ENCODE measurements at regions of chr19 and their contacts with region 1.

Region 1: GRCh38 chr19:48255376-48256303 is at the start of gene CARD8:
- DNase-seq: peak; percentile 54 to 91 (median 84)
- ATAC-seq: peak; percentile 85
- H3K4me3 ChIP-seq: peak within 1 kb of the TSS; percentile 100
- H3K4me3 Mint-ChIP-seq: peak within 1 kb of the TSS; percentile 74 to 100 (median 99)
- H3K27ac ChIP-seq: peak within 1 kb of the TSS; percentile 88
- H3K27ac Mint-ChIP-seq: peak within 1 kb of the TSS; percentile 90 to 100 (median 97)
- H3K4me1 ChIP-seq: peaks cover 53 to 56% of the 10 kb centered on the region in 2 donors
- H3K4me1 Mint-ChIP-seq: peaks cover 51 to 86% (median 76%) of the 10 kb centered on the region in 7 donors
- H3K27me3 ChIP-seq: no peaks in the 10 kb centered on the region
- H3K27me3 Mint-ChIP-seq: no peaks in the 10 kb centered on the region
- total RNA-seq, gene CARD8: 104 to 301 (median 182) TPM

Region 2: GRCh38 chr19:48110350-48110966 is 145.2 kb before region 1 on chr19 and contains the start of gene PLA2G4C:
- CTCF ChIA-PET with region 1: interaction called, 4 read pairs
- POLR2A ChIA-PET with region 1: no interaction called
- intact Hi-C with region 1: loop called (anchors 1 kb)
- DNase-seq: peak; percentile 69 to 88 (median 79)
- ATAC-seq: peak; percentile 83
- H3K4me3 ChIP-seq: peak within 1 kb of the TSS; percentile 62
- H3K4me3 Mint-ChIP-seq: peak within 1 kb of the TSS; percentile 66 to 86 (median 79)
- H3K27ac ChIP-seq: peak within 1 kb of the TSS; percentile 30
- H3K27ac Mint-ChIP-seq: peak within 1 kb of the TSS; percentile 37 to 92 (median 71)
- H3K4me1 ChIP-seq: no peaks in the 10 kb centered on the region
- H3K4me1 Mint-ChIP-seq: peaks cover 5 to 19% (median 9%) of the 10 kb centered on the region in 7 donors
- H3K27me3 ChIP-seq: no peaks in the 10 kb centered on the region
- H3K27me3 Mint-ChIP-seq: no peaks in the 10 kb centered on the region
- total RNA-seq, gene PLA2G4C: 3.3 to 21.2 (median 9.1) TPM

Region 3: DNA sequence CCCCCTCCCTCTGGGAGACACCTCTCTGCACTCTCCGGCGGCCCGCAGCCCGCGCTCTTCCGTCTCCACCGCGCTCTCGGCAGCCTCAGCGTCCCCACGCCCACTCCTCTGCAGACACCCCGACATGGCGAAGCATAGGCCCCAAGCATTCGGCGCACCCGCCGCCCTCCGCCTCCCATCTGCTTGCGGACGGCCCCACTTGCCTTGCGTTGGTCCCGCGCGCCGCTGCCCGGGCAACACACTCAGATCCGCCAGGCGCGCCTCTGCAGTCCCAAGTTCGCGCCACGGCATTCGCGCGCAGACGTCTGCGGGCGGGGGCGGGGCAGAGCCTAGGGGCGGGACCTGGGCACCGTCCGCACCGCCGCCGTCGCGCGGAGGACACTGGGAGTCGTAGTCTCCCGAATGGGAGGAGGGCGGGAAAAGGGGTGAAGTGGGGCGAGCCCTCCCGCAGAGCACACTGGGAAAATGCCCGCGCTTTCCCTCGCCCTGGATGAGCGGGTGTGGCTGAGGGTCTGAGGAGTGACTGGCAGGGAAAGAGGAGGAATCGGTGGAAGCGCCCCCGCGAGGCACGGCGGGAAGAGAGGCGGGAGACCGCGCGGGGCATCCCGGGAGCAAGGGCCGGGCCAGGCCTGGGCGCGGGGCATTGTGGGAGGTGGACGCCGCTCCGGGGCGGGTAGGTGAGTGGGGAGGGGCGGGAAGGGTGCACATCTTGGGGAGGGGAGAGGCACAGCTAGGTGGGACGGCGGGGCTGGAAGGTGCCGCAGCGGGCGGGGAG is 85.4 kb before region 1 on chr19 and contains the starts of genes LIG1 and ZSWIM9:
- CTCF ChIA-PET with region 1: interaction called, 5 read pairs
- POLR2A ChIA-PET with region 1: interaction called, 4 read pairs
- intact Hi-C with region 1: loop called (anchors 1 kb)
- DNase-seq: peak; percentile 87 to 96 (median 94)
- ATAC-seq: peak; percentile 89
- H3K4me3 ChIP-seq: peak within 1 kb of the TSS; percentile 98
- H3K4me3 Mint-ChIP-seq: peak within 1 kb of the TSS; percentile 90 to 100 (median 97)
- H3K27ac ChIP-seq: peak within 1 kb of the TSS; percentile 94
- H3K27ac Mint-ChIP-seq: peak within 1 kb of the TSS; percentile 92 to 100 (median 97)
- H3K4me1 ChIP-seq: peaks cover 14 to 16% of the 10 kb centered on the region in 2 donors
- H3K4me1 Mint-ChIP-seq: peaks cover 20 to 44% (median 32%) of the 10 kb centered on the region in 7 donors
- H3K27me3 ChIP-seq: no peaks in the 10 kb centered on the region
- H3K27me3 Mint-ChIP-seq: no peaks in the 10 kb centered on the region
- total RNA-seq, gene LIG1: 61.0 to 134 (median 122) TPM
- total RNA-seq, gene ZSWIM9: 5.0 to 11.6 (median 7.4) TPM

Region 4: DNA sequence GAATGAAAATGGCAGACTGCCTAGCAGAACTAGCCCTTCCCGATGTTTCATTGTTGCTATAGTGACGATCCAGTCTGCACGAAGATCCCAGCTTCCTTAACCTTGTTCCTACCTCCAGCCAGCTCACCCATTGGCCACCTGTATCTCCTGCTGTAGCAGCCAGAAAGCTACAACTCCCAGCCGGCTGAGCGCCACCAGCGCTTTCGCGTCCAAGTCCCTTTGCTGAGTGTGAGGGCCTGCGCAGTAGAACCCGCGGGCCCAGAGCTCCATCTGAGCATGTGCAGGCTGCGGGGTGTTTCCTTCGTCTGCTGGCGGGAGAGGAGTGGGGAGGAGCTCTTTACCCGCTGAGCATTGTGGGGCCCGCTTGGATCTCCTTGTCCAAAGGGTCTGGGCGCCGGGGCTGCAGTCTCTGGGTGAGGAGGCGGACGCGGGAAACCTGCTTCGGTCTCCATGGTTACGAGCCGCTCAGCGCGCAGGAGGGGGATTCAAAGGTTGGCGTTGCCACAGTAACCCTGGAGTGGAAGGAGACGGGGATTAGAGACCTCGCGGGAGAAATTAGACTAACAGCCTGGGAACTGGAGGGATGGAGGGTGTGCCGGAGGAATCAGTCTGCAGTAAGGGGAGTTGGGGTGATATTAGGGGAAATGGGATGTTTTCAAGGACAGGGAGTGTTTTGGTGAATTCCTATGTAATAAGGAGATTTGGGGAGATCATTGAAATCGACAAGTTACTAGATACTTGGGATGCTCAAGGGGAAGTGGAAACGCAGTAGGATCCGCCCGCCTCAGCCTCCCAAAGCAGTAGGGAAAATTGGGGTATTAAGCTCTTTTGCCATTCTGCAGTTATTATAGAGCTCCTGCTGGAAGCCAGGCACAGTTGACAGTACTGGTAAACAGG is 51.7 kb before region 1 on chr19:
- CTCF ChIA-PET with region 1: interaction called, 17 read pairs
- POLR2A ChIA-PET with region 1: interaction called, 21 read pairs
- intact Hi-C with region 1: loop called (anchors 1 to 2 kb)
- DNase-seq: peak; percentile 73 to 90 (median 89)
- ATAC-seq: peak; percentile 100
- H3K4me3 ChIP-seq: peak overlapping the region; percentile 73
- H3K4me3 Mint-ChIP-seq: no peak overlapping the region
- H3K27ac ChIP-seq: peak overlapping the region; percentile 81
- H3K27ac Mint-ChIP-seq: no peak overlapping the region
- H3K4me1 ChIP-seq: peaks cover 8 to 19% of the 10 kb centered on the region in 2 donors
- H3K4me1 Mint-ChIP-seq: peaks cover 4 to 34% (median 18%) of the 10 kb centered on the region in 7 donors
- H3K27me3 ChIP-seq: no peaks in the 10 kb centered on the region
- H3K27me3 Mint-ChIP-seq: no peaks in the 10 kb centered on the region

Region 5: DNA sequence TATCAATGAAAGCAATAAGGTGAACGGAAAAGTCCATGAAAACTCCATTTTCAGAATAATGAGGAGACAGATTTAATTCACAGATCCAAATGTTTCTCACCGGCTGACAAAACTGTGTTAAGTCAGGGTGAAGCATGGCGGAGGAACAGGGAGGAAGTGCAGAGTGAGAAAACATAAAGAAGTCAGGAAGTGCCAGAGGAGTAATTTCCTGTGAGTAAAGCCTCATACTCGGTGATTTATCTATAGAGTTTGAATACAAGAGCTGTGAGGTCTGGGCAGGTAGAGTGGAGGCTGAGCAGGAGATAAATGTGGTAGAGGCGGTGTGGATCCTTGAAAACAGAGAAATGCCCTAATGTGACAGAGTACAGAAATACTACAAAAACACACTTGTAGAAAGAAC is 11.4 kb before region 1 on chr19:
- CTCF ChIA-PET with region 1: interaction called, 7 read pairs
- POLR2A ChIA-PET with region 1: interaction called, 25 read pairs
- intact Hi-C with region 1: loop called (anchors 1 kb)
- DNase-seq: peak in 7 of 9 donors; percentile 37 to 61 (median 56)
- ATAC-seq: peak; percentile 95
- H3K4me3 ChIP-seq: peak overlapping the region; percentile 19
- H3K4me3 Mint-ChIP-seq: peak overlapping the region; percentile 75 to 91 (median 79)
- H3K27ac ChIP-seq: peak overlapping the region; percentile 63
- H3K27ac Mint-ChIP-seq: peak overlapping the region; percentile 77 to 93 (median 90)
- H3K4me1 ChIP-seq: peaks cover 25 to 39% of the 10 kb centered on the region in 2 donors
- H3K4me1 Mint-ChIP-seq: peaks cover 37 to 67% (median 52%) of the 10 kb centered on the region in 7 donors
- H3K27me3 ChIP-seq: no peaks in the 10 kb centered on the region
- H3K27me3 Mint-ChIP-seq: no peaks in the 10 kb centered on the region